ENCODE measurements at regions of chr2 and their contacts with region 1.

Region 1: DNA sequence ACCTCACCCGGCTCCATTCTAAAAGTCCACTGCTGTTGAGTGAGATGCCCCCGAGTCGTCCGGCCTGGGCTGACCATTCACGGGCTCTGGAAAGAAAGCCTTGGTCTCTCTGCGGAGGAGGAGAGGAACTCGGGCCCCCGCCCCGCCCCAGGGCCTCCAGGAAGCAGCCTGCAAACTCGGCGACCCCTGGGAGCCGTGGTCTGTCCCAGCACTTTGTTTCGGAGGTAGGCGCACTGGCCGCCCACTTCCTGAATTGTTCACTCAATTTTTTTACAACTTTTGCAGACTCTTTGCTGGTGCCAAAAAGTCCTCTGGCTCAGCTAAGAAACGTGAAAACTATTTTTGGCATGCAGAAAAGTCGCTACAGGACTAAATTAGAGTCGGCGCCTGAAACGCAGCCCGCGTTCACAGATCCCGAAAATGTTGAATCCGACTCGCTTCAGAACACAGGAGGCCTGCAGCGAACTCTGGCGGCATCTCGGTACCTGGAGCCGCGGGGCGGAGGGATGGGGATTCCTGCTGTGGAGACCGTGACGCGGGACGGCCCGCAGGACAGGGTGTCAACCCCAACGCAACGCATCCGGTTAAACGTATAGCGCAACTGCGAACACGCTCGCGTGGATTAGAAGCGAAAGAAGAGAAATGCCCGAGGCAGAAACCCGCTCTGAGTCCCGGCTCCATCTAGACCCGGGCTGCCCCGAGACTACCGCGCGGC is 1.5 kb downstream of the PXDN start:
- DNase-seq: no peak
- ATAC-seq: peak; percentile 42
- H3K4me3 Mint-ChIP-seq: peak overlapping the region; percentile 82
- H3K27ac Mint-ChIP-seq: peak overlapping the region; percentile 50
- H3K4me1 Mint-ChIP-seq: peaks cover 17% of the 10 kb centered on the region
- H3K27me3 Mint-ChIP-seq: peaks cover 39% of the 10 kb centered on the region
- CTCF ChIP-seq: no peak

Region 2: GRCh38 chr2:1309507-1309906 is 433.3 kb before region 1 on chr2:
- CTCF ChIA-PET with region 1: no interaction called
- POLR2A ChIA-PET with region 1: no interaction called
- intact Hi-C with region 1: no loop called
- DNase-seq: no peak
- ATAC-seq: no peak
- H3K4me3 Mint-ChIP-seq: no peak overlapping the region
- H3K27ac Mint-ChIP-seq: no peak overlapping the region
- H3K4me1 Mint-ChIP-seq: no peaks in the 10 kb centered on the region
- H3K27me3 Mint-ChIP-seq: no peaks in the 10 kb centered on the region
- CTCF ChIP-seq: no peak

Region 3: DNA sequence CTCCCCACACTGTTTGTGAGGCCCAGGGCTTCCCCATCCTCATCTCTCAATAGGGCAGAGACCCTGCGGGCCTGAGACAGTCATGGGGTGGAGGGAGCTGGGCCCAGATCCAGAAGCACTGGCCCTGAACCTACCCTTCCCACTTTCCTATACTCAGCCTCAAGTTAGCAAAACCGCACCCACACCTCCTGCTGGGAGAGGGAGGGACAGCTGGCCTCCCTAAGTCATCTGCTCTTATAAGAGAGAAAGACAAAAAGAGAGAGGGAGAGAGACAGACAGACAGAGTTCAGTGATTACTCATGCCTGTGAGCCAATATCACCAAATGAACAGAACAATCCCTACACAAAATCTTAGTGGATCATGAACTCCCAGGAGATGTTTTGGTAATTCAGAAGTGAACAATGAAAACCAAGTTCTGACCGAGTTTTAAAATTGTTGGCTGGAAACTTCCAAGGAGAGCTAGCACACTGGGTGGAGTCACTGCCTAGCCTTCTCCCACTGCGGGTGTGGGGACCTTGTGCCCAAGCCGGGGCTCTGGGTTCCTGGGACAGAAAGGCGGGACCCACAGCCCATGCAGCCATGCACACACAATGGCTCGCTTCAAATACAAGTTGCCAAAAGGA is 129.0 kb before region 1 on chr2:
- CTCF ChIA-PET with region 1: no interaction called
- POLR2A ChIA-PET with region 1: no interaction called
- intact Hi-C with region 1: loop called (anchors 5 kb)
- DNase-seq: no peak
- ATAC-seq: no peak
- H3K4me3 Mint-ChIP-seq: peak overlapping the region; percentile 0
- H3K27ac Mint-ChIP-seq: no peak overlapping the region
- H3K4me1 Mint-ChIP-seq: peaks cover 70% of the 10 kb centered on the region
- H3K27me3 Mint-ChIP-seq: no peaks in the 10 kb centered on the region
- CTCF ChIP-seq: no peak

Region 4: GRCh38 chr2:1675633-1676032 is 67.2 kb before region 1 on chr2:
- CTCF ChIA-PET with region 1: no interaction called
- POLR2A ChIA-PET with region 1: no interaction called
- intact Hi-C with region 1: no loop called
- DNase-seq: no peak
- ATAC-seq: no peak
- H3K4me3 Mint-ChIP-seq: no peak overlapping the region
- H3K27ac Mint-ChIP-seq: no peak overlapping the region
- H3K4me1 Mint-ChIP-seq: no peaks in the 10 kb centered on the region
- H3K27me3 Mint-ChIP-seq: no peaks in the 10 kb centered on the region
- CTCF ChIP-seq: no peak

Region 5: DNA sequence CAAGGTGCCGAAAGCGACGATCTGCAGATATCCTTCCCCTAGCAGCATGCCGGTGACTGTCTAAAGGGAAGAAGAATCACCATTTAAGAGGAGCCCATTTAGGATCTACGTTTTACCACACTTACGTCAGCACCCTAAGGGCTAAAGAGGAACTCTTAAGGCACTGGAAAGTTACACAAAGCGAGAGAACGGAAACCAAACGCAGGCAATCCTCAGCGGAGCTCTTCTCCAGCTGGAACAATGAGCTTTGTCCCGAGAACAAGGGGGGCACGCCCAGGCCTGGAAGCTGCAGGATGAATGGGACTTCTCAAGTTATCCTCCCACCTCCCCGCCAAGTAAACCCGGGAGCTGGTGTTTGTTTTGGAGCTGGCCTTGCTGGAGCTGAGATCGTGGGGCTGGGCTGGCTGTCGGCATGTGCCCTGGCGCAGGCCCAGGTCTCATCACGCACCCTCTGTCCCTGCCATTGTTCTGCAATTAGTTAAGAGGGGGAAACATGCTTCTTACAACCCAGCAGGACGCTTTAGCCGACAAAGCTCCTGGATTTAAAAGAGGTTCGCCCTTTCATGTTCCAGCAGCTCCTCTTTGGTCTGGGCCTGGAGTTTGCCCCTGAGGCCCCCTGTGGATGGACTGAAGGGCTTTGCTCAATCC is 34.9 kb before region 1 on chr2:
- CTCF ChIA-PET with region 1: no interaction called
- POLR2A ChIA-PET with region 1: no interaction called
- intact Hi-C with region 1: loop called (anchors 2 kb)
- DNase-seq: no peak
- ATAC-seq: peak; percentile 25
- H3K4me3 Mint-ChIP-seq: peak overlapping the region; percentile 4
- H3K27ac Mint-ChIP-seq: no peak overlapping the region
- H3K4me1 Mint-ChIP-seq: peaks cover 5% of the 10 kb centered on the region
- H3K27me3 Mint-ChIP-seq: peaks cover 4% of the 10 kb centered on the region
- CTCF ChIP-seq: no peak

Region 6: GRCh38 chr2:1950474-1950873 is 207.6 kb after region 1 on chr2:
- CTCF ChIA-PET with region 1: no interaction called
- POLR2A ChIA-PET with region 1: no interaction called
- intact Hi-C with region 1: no loop called
- DNase-seq: no peak
- ATAC-seq: no peak
- H3K4me3 Mint-ChIP-seq: no peak overlapping the region
- H3K27ac Mint-ChIP-seq: no peak overlapping the region
- H3K4me1 Mint-ChIP-seq: no peaks in the 10 kb centered on the region
- H3K27me3 Mint-ChIP-seq: no peaks in the 10 kb centered on the region
- CTCF ChIP-seq: no peak